K562 (cell line): ENCODE measurements at regions of chr1 and their contacts with region 1.

Region 1: GRCh38 chr1:19153169-19153568 is 56.9 kb downstream of the UBR4 start:
- DNase-seq: no peak
- ATAC-seq: peak; percentile 46; the same call in 2 of the 3 replicates
- H3K4me3 ChIP-seq: no peak overlapping the region
- H3K27ac ChIP-seq: no peak overlapping the region
- H3K4me1 ChIP-seq: no peaks in the 10 kb centered on the region
- H3K27me3 ChIP-seq: no peaks in the 10 kb centered on the region
- CTCF ChIP-seq: peak; percentile 8 to 40 (median 24); a peak in 4 of 6 replicates
- EP300 ChIP-seq: no peak
- POLR2A ChIP-seq: no peak
- RAD21 ChIP-seq: no peak

Region 2: GRCh38 chr1:19101244-19101643 is 51.9 kb before region 1 on chr1:
- CTCF ChIA-PET with region 1: no interaction called
- POLR2A ChIA-PET with region 1: no interaction called
- in situ Hi-C with region 1: no loop called
- intact Hi-C with region 1: loop called (anchors 5 kb)
- DNase-seq: no peak
- ATAC-seq: no peak
- H3K4me3 ChIP-seq: no peak overlapping the region
- H3K27ac ChIP-seq: no peak overlapping the region
- H3K4me1 ChIP-seq: no peaks in the 10 kb centered on the region
- H3K27me3 ChIP-seq: no peaks in the 10 kb centered on the region
- CTCF ChIP-seq: no peak
- EP300 ChIP-seq: no peak
- POLR2A ChIP-seq: no peak
- RAD21 ChIP-seq: no peak

Region 3: DNA sequence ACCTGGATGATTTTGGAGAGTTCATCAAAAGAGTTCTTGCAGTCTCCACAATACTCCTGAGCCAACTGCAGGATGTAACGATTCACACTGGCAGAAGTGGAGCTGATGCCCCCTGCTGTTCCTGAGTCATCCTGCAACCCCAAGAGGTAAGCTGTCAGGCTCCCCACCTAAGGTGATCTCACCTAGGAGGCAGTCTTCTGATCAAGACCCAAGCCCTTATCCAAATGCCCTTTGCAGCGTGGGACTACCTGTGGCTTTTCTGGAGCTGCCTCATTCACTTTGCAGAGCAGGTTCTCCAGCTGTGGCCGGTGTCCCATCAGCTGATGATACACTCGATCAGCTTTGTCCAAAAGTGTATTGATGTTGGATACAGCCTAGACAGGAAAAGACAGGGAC is 39.5 kb before region 1 on chr1:
- CTCF ChIA-PET with region 1: no interaction called
- POLR2A ChIA-PET with region 1: interaction called, 6 read pairs
- in situ Hi-C with region 1: no loop called
- intact Hi-C with region 1: loop called (anchors 5 kb)
- DNase-seq: peak; percentile 73 to 82 (median 75)
- ATAC-seq: peak; percentile 86
- H3K4me3 ChIP-seq: no peak overlapping the region
- H3K27ac ChIP-seq: no peak overlapping the region
- H3K4me1 ChIP-seq: peaks cover 7 to 17% of the 10 kb centered on the region in 2 experiments; a peak in 3 of 5 replicates
- H3K27me3 ChIP-seq: no peaks in the 10 kb centered on the region
- CTCF ChIP-seq: peak; percentile 66 to 77 (median 74)
- EP300 ChIP-seq: no peak
- POLR2A ChIP-seq: no peak
- RAD21 ChIP-seq: peak; percentile 57 to 68

Region 4: GRCh38 chr1:19139711-19140110 is 13.5 kb before region 1 on chr1:
- CTCF ChIA-PET with region 1: no interaction called
- POLR2A ChIA-PET with region 1: interaction called, 22 read pairs
- in situ Hi-C with region 1: no loop called
- intact Hi-C with region 1: no loop called
- DNase-seq: no peak
- ATAC-seq: no peak
- H3K4me3 ChIP-seq: no peak overlapping the region
- H3K27ac ChIP-seq: no peak overlapping the region
- H3K4me1 ChIP-seq: no peaks in the 10 kb centered on the region
- H3K27me3 ChIP-seq: no peaks in the 10 kb centered on the region
- CTCF ChIP-seq: no peak
- EP300 ChIP-seq: no peak
- POLR2A ChIP-seq: no peak
- RAD21 ChIP-seq: no peak

Region 5: DNA sequence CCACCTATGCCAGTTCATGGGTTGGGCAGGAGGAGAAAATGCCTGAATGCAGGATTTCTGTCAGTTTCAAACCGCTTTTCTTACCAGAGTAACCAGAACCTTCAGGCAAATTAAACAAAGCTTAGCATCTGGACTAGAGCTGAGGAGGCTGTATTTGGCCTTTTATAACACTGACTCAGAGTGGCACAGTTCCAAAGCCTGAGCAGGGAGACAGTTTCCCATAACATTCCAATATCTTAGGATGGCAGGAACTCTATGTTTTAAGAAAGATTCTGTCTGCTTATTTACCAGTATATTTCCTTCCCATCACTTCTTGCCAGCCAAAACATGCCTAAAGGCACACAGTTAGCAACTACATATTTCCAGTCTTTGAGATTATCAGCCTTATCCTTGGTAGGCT is 10.1 kb after region 1 on chr1:
- CTCF ChIA-PET with region 1: no interaction called
- POLR2A ChIA-PET with region 1: interaction called, 10 read pairs
- in situ Hi-C with region 1: no loop called
- intact Hi-C with region 1: no loop called
- DNase-seq: no peak
- ATAC-seq: no peak
- H3K4me3 ChIP-seq: no peak overlapping the region
- H3K27ac ChIP-seq: no peak overlapping the region
- H3K4me1 ChIP-seq: no peaks in the 10 kb centered on the region
- H3K27me3 ChIP-seq: no peaks in the 10 kb centered on the region
- CTCF ChIP-seq: no peak
- EP300 ChIP-seq: no peak
- POLR2A ChIP-seq: no peak
- RAD21 ChIP-seq: no peak

Region 6: GRCh38 chr1:19260211-19261138 is 107.3 kb after region 1 on chr1:
- CTCF ChIA-PET with region 1: no interaction called
- POLR2A ChIA-PET with region 1: no interaction called
- in situ Hi-C with region 1: no loop called
- intact Hi-C with region 1: no loop called
- DNase-seq: peak in 2 of 4 experiments; percentile 24 to 40
- ATAC-seq: peak; percentile 65
- H3K4me3 ChIP-seq: no peak overlapping the region
- H3K27ac ChIP-seq: peak overlapping the region; percentile 52; the same call in 2 of the 3 replicates
- H3K4me1 ChIP-seq: peaks cover 0 to 13% of the 10 kb centered on the region in 2 experiments; a peak in 3 of 5 replicates
- H3K27me3 ChIP-seq: no peaks in the 10 kb centered on the region
- CTCF ChIP-seq: no peak
- EP300 ChIP-seq: no peak
- POLR2A ChIP-seq: peak; percentile 72
- RAD21 ChIP-seq: no peak

Region 7: DNA sequence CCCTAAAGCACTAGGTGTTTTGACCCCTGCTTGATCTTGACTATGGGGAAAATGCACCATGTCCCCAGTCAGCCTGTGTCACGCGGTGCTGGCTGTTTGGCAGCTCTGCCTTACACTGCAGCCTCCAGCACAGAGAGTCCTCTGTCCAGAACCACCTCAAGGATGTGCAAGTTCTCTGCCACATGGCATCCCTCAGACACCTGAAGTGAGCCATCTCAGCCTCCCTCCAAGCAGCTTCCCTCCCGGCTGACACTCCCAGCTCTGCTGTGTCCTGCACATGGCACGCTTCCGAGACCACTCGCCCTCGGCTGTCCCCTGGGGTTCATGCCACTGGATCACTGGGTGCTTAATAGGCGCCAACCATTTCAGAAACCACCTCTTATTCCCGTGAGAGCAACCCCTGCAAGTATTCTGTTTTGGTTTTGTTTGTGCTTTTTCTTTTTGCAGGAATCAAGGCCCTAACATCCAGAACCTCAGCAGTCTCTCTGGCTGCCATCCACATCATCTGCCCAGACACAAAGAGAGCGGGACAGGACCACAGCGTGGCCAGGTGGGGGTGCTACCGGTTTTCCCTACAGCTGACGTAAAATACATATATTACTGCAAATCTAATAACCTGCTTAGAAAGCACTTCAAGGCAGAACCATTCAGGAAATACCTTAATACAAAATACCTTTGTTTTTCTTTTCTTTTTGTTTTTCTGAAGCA is 286.4 kb after region 1 on chr1:
- CTCF ChIA-PET with region 1: no interaction called
- POLR2A ChIA-PET with region 1: no interaction called
- in situ Hi-C with region 1: no loop called
- intact Hi-C with region 1: no loop called
- DNase-seq: peak; percentile 48 to 65 (median 64)
- ATAC-seq: peak; percentile 78
- H3K4me3 ChIP-seq: no peak overlapping the region
- H3K27ac ChIP-seq: no peak overlapping the region
- H3K4me1 ChIP-seq: peaks cover 15 to 20% of the 10 kb centered on the region in 2 experiments
- H3K27me3 ChIP-seq: no peaks in the 10 kb centered on the region
- CTCF ChIP-seq: peak; percentile 52 to 74 (median 70)
- EP300 ChIP-seq: no peak
- POLR2A ChIP-seq: no peak
- RAD21 ChIP-seq: peak; percentile 24 to 74; a peak in 2 of 4 replicates